ENCODE measurements at regions of chr11 and their contacts with region 1.

Region 1: DNA sequence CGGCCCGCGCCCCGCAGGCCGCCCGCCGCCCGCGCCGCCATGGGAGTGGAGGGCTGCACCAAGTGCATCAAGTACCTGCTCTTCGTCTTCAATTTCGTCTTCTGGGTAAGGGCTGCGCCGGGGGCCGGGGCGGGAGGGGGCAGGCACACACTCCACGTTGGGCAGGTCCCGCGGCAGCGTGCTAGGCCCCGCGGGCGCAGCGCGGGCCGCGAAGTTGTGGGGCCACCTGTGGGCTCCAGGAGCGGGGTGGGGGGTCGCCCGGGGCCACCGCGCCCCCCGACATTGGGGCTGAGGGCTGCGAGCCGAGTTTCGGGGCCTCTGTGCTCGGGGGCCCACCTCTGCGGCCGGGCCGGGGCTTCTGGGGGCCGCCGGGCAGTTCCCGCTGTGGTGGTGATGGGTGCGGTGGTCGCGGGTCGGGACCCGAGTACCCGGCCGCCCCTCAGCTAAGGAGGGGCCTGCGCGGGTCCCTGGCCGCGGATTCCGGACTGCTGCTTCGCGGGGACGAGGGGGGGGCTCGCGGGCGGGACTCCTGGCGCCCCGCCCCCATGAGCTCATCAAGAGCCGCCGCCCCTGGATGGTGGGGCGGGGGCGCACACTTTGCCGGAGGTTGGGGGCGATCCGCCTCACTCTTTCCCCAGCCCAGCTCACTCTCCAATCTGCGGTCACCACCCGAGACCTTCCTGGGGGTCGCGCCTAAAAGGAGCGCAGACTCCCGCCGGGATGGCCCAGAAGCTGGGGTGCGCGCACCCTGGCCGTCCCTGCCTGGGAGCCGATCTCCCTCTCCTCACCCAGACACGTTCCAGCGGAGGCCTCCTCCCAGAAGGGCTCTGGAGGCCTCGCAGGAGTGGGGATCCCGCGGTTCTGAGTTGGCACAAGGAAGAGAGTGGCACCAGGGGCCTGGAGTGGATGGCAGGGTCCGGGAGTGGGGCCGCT is 667 bp downstream of the CD81 start:
- DNase-seq: peak in 4 of 5 donors; percentile 79 to 86 (median 84)
- ATAC-seq: peak in 3 of 4 donors; percentile 23 to 48 (median 34)
- H3K4me3 ChIP-seq: peak overlapping the region; percentile 70 to 100 (median 100)
- H3K27ac ChIP-seq: peak overlapping the region; percentile 91 to 100 (median 99)
- H3K4me1 ChIP-seq: peaks cover 23 to 84% (median 50%) of the 10 kb centered on the region in 12 donors
- H3K27me3 ChIP-seq: no peaks in the 10 kb centered on the region
- CTCF ChIP-seq: no peak
- POLR2A ChIP-seq: no peak

Region 2: GRCh38 chr11:2298795-2299761 is 78.7 kb before region 1 on chr11:
- intact Hi-C with region 1: loop called in 4 of 10 experiments (anchors 1 to 2 kb)
- DNase-seq: peak in 2 of 5 donors; percentile 21 to 62
- ATAC-seq: no peak
- H3K4me3 ChIP-seq: no peak overlapping the region
- H3K27ac ChIP-seq: peak overlapping the region in 3 of 12 donors; percentile 3 to 23 (median 10)
- H3K4me1 ChIP-seq: peaks cover 0 to 49% (median 12%) of the 10 kb centered on the region in 12 donors
- H3K27me3 ChIP-seq: no peaks in the 10 kb centered on the region
- CTCF ChIP-seq: peak in 10 of 12 donors; percentile 12 to 42 (median 26)
- POLR2A ChIP-seq: no peak

Region 3: GRCh38 chr11:2314525-2315394 is 63.0 kb before region 1 on chr11:
- intact Hi-C with region 1: loop called in 8 of 10 experiments (anchors 2 to 5 kb)
- DNase-seq: peak; percentile 92 to 97 (median 94)
- ATAC-seq: peak; percentile 86 to 91 (median 89)
- H3K4me3 ChIP-seq: peak overlapping the region in 9 of 12 donors; percentile 14 to 34 (median 26)
- H3K27ac ChIP-seq: peak overlapping the region; percentile 69 to 90 (median 86)
- H3K4me1 ChIP-seq: peaks cover 0 to 41% (median 26%) of the 10 kb centered on the region in 12 donors
- H3K27me3 ChIP-seq: no peaks in the 10 kb centered on the region
- CTCF ChIP-seq: no peak
- POLR2A ChIP-seq: no peak

Region 4: GRCh38 chr11:2325719-2326118 is 52.1 kb before region 1 on chr11:
- intact Hi-C with region 1: loop called in 2 of 10 experiments (anchors 5 kb)
- DNase-seq: peak in 4 of 5 donors; percentile 64 to 85 (median 74)
- ATAC-seq: peak; percentile 96 to 99 (median 98)
- H3K4me3 ChIP-seq: no peak overlapping the region
- H3K27ac ChIP-seq: peak overlapping the region in 8 of 12 donors; percentile 25 to 73 (median 60)
- H3K4me1 ChIP-seq: peaks cover 0 to 18% (median 6%) of the 10 kb centered on the region in 12 donors
- H3K27me3 ChIP-seq: no peaks in the 10 kb centered on the region
- CTCF ChIP-seq: no peak
- POLR2A ChIP-seq: no peak

Region 5: GRCh38 chr11:2400069-2400760 is 22.4 kb after region 1 on chr11 and contains the start of gene TSSC4:
- intact Hi-C with region 1: loop called in 3 of 10 experiments (anchors 1 to 2 kb)
- DNase-seq: peak; percentile 100
- ATAC-seq: peak; percentile 90 to 95 (median 92)
- H3K4me3 ChIP-seq: peak within 1 kb of the TSS; percentile 69 to 100 (median 86)
- H3K27ac ChIP-seq: peak within 1 kb of the TSS; percentile 76 to 100 (median 98)
- H3K4me1 ChIP-seq: peaks cover 0 to 27% (median 25%) of the 10 kb centered on the region in 12 donors
- H3K27me3 ChIP-seq: no peaks in the 10 kb centered on the region
- CTCF ChIP-seq: peak; percentile 95 to 100 (median 98)
- POLR2A ChIP-seq: peak in 1 of 2 donors; percentile 72
- total RNA-seq, gene TSSC4: 23.4 to 45.2 (median 37.2) TPM

Measured in heart left ventricle (tissue), 16 donors.